MCF 10A (cell line): ENCODE measurements at regions of chr11 and their contacts with region 1.

Region 1: DNA sequence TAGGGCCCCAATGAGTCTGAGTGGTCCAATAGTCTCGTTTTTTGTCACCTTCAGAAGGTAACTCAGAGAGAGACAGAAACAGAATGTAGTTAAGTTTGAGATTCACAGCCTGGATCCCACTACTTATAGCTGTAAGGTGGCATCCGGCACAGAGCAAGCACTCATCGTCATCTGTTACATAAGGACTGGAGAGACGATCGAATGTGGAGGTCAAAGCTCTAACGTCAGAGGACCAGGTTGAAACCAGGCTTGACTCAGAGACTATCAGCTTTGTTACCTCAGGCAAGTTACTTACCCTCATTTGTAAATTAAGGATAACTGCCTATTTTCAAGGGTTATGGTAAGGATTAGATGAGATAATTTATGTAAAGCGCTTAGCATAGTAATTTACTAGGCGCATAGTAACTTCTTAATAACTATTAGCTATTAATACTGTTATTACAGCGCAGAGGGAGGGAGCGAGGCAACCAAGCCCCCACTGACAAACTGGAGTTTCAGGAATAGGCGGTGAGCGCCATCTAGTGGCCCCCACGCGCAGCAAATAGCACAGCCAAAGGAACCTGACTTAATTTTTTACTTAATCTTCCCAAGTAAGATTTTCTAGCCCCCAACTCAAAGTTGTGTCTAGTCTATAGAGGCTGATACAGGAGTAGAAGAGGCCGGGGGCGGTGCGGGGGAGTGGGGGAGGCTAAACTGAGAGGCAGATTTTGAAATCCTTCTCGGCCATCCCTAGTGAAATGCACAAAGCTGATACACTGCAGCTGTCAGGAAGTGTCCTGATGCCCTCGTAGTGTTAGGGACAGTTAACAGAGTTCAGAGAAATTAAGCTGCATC is 29.0 kb upstream of the API5 start:
- DNase-seq: peak; percentile 48
- H3K4me3 Mint-ChIP-seq: no peak overlapping the region
- H3K27ac Mint-ChIP-seq: no peak overlapping the region
- H3K4me1 Mint-ChIP-seq: peaks cover 7% of the 10 kb centered on the region
- H3K27me3 Mint-ChIP-seq: no peaks in the 10 kb centered on the region
- CTCF ChIP-seq: peak; percentile 91

Region 2: DNA sequence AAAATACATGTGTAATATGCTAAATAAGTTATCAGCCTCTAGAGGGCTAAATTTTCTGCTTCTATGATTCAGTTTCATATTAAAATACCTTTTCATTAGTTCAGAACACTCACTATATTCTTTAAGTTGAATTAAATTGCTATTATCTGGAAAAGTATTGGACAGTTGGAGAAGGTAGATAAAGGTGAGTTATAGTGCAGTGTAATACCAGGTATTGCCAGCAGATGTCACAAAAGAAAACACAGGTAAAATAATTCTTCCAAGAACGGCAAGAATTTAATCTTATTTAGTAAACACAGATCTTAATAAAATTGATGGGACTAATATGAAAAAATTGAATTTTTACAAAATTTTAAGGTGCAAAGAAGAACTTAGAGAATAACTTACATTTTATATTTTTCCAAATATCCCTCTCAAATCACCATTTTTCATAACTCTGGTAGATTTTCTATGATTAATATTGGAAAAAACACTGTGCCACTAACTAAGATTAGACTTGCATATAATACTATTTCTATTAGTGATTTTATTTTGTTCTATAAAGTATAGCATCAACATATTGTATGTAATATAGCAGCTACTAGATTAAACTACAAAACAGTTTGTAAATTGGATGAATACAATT is 1821.7 kb before region 1 on chr11:
- CTCF ChIA-PET with region 1: interaction called, 24 read pairs
- POLR2A ChIA-PET with region 1: no interaction called
- intact Hi-C with region 1: no loop called
- DNase-seq: peak; percentile 33
- H3K4me3 Mint-ChIP-seq: no peak overlapping the region
- H3K27ac Mint-ChIP-seq: no peak overlapping the region
- H3K4me1 Mint-ChIP-seq: peaks cover 11% of the 10 kb centered on the region
- H3K27me3 Mint-ChIP-seq: peaks cover 14% of the 10 kb centered on the region
- CTCF ChIP-seq: peak; percentile 67

Region 3: DNA sequence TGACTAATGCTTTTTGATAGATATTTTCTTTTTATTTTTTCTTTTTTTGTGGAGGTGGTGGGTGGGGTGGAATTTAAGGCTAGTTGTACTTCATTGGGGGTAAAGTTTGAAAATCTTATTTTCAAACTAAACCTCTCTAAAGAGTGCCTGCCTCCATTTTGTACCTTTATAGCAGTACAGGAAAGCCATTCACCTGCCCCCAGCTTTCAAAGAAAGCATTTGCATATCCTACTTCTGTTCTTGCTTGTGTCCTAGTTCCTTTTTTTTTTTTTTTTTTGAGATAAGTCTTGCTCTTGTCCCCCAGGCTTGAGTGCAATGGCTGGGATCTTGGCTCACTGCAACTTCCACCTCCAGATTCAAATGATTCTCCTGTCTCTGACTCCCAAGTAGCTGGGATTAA is 1057.2 kb before region 1 on chr11:
- CTCF ChIA-PET with region 1: no interaction called
- POLR2A ChIA-PET with region 1: no interaction called
- intact Hi-C with region 1: no loop called
- DNase-seq: no peak
- H3K4me3 Mint-ChIP-seq: no peak overlapping the region
- H3K27ac Mint-ChIP-seq: no peak overlapping the region
- H3K4me1 Mint-ChIP-seq: no peaks in the 10 kb centered on the region
- H3K27me3 Mint-ChIP-seq: no peaks in the 10 kb centered on the region
- CTCF ChIP-seq: no peak

Region 4: GRCh38 chr11:42524534-42525227 is 758.1 kb before region 1 on chr11:
- CTCF ChIA-PET with region 1: interaction called, 4 read pairs
- POLR2A ChIA-PET with region 1: no interaction called
- intact Hi-C with region 1: loop called (anchors 5 kb)
- DNase-seq: peak; percentile 40
- H3K4me3 Mint-ChIP-seq: no peak overlapping the region
- H3K27ac Mint-ChIP-seq: no peak overlapping the region
- H3K4me1 Mint-ChIP-seq: peaks cover 6% of the 10 kb centered on the region
- H3K27me3 Mint-ChIP-seq: no peaks in the 10 kb centered on the region
- CTCF ChIP-seq: peak; percentile 83

Region 5: GRCh38 chr11:42674436-42674835 is 608.4 kb before region 1 on chr11:
- CTCF ChIA-PET with region 1: no interaction called
- POLR2A ChIA-PET with region 1: no interaction called
- intact Hi-C with region 1: no loop called
- DNase-seq: no peak
- H3K4me3 Mint-ChIP-seq: no peak overlapping the region
- H3K27ac Mint-ChIP-seq: no peak overlapping the region
- H3K4me1 Mint-ChIP-seq: no peaks in the 10 kb centered on the region
- H3K27me3 Mint-ChIP-seq: no peaks in the 10 kb centered on the region
- CTCF ChIP-seq: no peak

Region 6: DNA sequence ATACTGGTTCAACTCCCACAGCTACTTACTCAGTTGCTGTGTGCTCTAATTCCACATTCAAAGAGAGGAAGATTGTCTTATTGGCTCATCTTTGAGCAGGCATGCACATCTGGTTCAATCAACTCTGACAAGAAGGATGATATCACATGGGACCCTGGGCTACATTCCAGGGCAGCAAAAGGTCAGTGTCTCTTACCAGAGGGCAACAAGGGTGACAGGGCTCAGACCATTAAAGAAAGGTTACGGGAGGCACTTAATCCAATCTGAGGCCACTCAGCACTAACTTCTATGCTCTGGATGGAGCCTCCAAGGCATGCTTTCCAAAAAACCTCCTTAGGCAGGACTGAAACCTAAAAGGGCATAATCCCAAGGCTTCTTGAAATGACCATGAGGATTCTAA is 520.5 kb before region 1 on chr11:
- CTCF ChIA-PET with region 1: interaction called, 20 read pairs
- POLR2A ChIA-PET with region 1: no interaction called
- intact Hi-C with region 1: no loop called
- DNase-seq: no peak
- H3K4me3 Mint-ChIP-seq: no peak overlapping the region
- H3K27ac Mint-ChIP-seq: no peak overlapping the region
- H3K4me1 Mint-ChIP-seq: no peaks in the 10 kb centered on the region
- H3K27me3 Mint-ChIP-seq: no peaks in the 10 kb centered on the region
- CTCF ChIP-seq: no peak

Region 7: DNA sequence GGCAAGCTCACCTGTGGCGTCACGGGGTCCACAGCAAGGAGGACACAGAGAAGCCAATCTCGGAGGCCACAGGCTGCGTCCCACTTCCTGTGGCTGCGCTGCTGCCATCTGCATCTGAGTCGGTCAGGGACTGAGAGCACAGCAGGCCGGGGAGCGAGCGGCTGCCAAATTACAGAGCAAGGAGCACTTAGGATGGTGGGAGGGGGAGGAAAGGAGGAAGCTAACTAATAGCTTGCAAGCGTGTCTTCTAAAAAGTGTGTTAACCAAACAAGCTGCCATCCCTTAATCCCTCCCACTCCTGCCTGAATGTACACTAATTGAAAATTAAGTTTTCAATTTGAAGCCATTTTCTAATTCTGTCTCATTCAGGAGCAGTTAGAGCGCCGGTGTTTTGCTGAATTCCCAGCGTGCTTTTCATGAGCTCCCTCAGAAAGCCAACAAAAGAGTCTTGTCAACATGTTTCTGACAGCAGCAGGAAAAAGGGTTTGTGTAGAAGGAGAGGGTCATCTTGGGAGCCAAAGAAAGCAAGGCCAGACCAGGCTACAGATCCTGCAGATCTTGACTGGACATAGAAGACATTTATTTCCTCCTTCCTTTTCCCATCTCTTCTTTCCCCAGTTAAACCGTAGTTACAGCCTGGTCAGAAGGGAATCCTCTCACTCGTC is 13.4 kb before region 1 on chr11:
- CTCF ChIA-PET with region 1: interaction called, 43 read pairs
- POLR2A ChIA-PET with region 1: interaction called, 3 read pairs
- intact Hi-C with region 1: no loop called
- DNase-seq: no peak
- H3K4me3 Mint-ChIP-seq: no peak overlapping the region
- H3K27ac Mint-ChIP-seq: no peak overlapping the region
- H3K4me1 Mint-ChIP-seq: no peaks in the 10 kb centered on the region
- H3K27me3 Mint-ChIP-seq: no peaks in the 10 kb centered on the region
- CTCF ChIP-seq: no peak

Region 8: GRCh38 chr11:43419460-43419859 is 136.6 kb after region 1 on chr11:
- CTCF ChIA-PET with region 1: interaction called, 7 read pairs
- POLR2A ChIA-PET with region 1: interaction called, 3 read pairs
- intact Hi-C with region 1: loop called (anchors 1 kb)
- DNase-seq: peak; percentile 49
- H3K4me3 Mint-ChIP-seq: no peak overlapping the region
- H3K27ac Mint-ChIP-seq: no peak overlapping the region
- H3K4me1 Mint-ChIP-seq: no peaks in the 10 kb centered on the region
- H3K27me3 Mint-ChIP-seq: no peaks in the 10 kb centered on the region
- CTCF ChIP-seq: peak; percentile 49

Region 9: GRCh38 chr11:43619863-43620505 is 337.2 kb after region 1 on chr11:
- CTCF ChIA-PET with region 1: no interaction called
- POLR2A ChIA-PET with region 1: no interaction called
- intact Hi-C with region 1: no loop called
- DNase-seq: no peak
- H3K4me3 Mint-ChIP-seq: no peak overlapping the region
- H3K27ac Mint-ChIP-seq: no peak overlapping the region
- H3K4me1 Mint-ChIP-seq: no peaks in the 10 kb centered on the region
- H3K27me3 Mint-ChIP-seq: peaks cover 63% of the 10 kb centered on the region
- CTCF ChIP-seq: no peak

Region 10: DNA sequence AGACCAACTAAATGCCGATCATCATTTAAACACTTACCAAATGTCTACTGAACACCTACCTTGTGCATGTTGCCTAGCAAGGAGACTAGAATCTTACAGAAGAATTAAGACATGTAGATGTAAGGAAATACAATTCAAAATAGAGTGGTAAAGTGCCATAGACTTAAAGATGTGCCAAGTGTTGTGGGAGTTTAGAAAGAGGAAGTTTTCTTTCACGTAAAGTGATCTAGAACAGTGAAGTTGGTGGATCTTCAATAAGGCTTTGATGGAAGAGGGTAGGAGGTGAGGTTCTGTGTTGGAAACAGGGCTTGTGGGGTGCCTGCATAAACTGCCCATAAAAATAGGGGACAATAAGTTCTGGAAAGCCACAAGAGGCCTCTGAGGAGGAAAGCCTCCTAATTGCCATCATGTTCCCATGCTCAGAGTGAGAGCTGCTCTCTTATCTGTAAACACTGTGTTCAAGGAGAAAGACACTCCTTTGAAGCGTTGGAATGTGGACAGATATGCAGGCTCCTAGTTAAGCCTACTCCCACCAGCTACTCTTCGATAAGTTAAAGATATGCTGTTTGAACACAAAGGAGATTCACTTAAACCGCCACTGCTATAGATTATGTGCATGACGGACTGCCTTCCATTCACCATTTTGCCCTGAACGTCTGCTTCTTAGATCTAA is 464.4 kb after region 1 on chr11:
- CTCF ChIA-PET with region 1: no interaction called
- POLR2A ChIA-PET with region 1: no interaction called
- intact Hi-C with region 1: no loop called
- DNase-seq: no peak
- H3K4me3 Mint-ChIP-seq: no peak overlapping the region
- H3K27ac Mint-ChIP-seq: no peak overlapping the region
- H3K4me1 Mint-ChIP-seq: no peaks in the 10 kb centered on the region
- H3K27me3 Mint-ChIP-seq: no peaks in the 10 kb centered on the region
- CTCF ChIP-seq: no peak